ENCODE measurements at regions of chr10 and their contacts with region 1.

Region 1: DNA sequence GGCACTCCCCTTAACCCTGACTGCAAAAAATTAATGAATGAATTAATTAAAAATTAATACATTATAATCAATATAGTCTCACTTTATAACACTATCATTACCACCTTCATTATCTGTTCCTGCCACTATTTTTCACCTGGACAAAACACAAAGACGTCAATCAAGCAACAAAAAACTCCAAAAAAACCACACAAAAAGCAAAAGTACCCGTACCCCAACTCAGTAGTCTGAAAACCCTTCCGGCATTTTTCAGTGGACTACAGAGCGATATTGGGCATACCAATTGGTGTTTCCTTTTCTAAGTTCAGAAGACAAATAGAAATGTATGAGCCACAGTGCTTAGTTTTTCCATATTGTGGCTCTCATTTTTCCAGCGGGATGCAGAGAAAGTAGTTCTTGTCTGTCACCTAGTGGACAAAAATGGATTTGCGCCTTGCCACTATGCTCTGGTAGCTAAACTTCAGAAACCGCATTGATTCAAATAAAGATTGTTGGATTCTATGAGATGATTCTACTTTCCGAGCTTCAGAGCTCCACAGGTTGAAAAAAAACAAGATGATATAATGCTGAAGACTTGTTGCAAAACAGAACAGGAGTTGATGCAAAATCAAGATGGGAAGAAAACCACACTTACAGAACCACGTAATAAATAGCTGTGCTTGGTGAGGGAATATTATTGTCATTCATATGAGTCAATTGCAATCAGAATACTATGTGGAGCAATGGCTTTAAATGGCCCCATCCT is 50.6 kb upstream of the ITGB1 start:
- DNase-seq: peak in 2 of 4 donors; percentile 62 to 82
- ATAC-seq: peak; percentile 59
- H3K4me3 ChIP-seq: no peak overlapping the region
- H3K27ac ChIP-seq: no peak overlapping the region
- H3K4me1 ChIP-seq: peaks cover 0 to 37% of the 10 kb centered on the region in 2 donors
- H3K27me3 ChIP-seq: no peaks in the 10 kb centered on the region
- CTCF ChIP-seq: peak; percentile 90 to 99

Region 2: GRCh38 chr10:32795598-32796183 is 213.0 kb before region 1 on chr10:
- intact Hi-C with region 1: loop called in 1 of 2 experiments (anchors 5 kb)
- DNase-seq: peak in 2 of 4 donors; percentile 15 to 36
- ATAC-seq: peak; percentile 65
- H3K4me3 ChIP-seq: no peak overlapping the region
- H3K27ac ChIP-seq: no peak overlapping the region
- H3K4me1 ChIP-seq: no peaks in the 10 kb centered on the region
- H3K27me3 ChIP-seq: no peaks in the 10 kb centered on the region
- CTCF ChIP-seq: peak; percentile 26 to 68

Measured in left lung (tissue), 14 donors.